ENCODE measurements at regions of chr12 and their contacts with region 1.

Region 1: GRCh38 chr12:6867413-6868210 is at the start of gene TPI1:
- DNase-seq: peak; percentile 79 to 83
- ATAC-seq: peak; percentile 83 to 84
- H3K4me3 ChIP-seq: peak within 1 kb of the TSS; percentile 74 to 99 (median 91)
- H3K27ac ChIP-seq: peak within 1 kb of the TSS; percentile 93 to 100 (median 99)
- H3K4me1 ChIP-seq: peaks cover 35 to 38% of the 10 kb centered on the region in 2 donors
- H3K27me3 ChIP-seq: no peaks in the 10 kb centered on the region
- CTCF ChIP-seq: no peak
- POLR2A ChIP-seq: peak; percentile 95 to 98
- total RNA-seq, gene TPI1: 500 to 741 (median 604) TPM

Region 2: GRCh38 chr12:6839482-6840201 is 28.0 kb before region 1 on chr12:
- in situ Hi-C with region 1: no loop called
- intact Hi-C with region 1: no loop called
- DNase-seq: no peak
- ATAC-seq: no peak
- H3K4me3 ChIP-seq: no peak overlapping the region
- H3K27ac ChIP-seq: no peak overlapping the region
- H3K4me1 ChIP-seq: no peaks in the 10 kb centered on the region
- H3K27me3 ChIP-seq: no peaks in the 10 kb centered on the region
- CTCF ChIP-seq: no peak
- POLR2A ChIP-seq: no peak

Region 3: GRCh38 chr12:6851921-6852650 is 15.5 kb before region 1 on chr12 and contains the start of gene USP5:
- in situ Hi-C with region 1: no loop called
- intact Hi-C with region 1: loop called (anchors 1 kb)
- DNase-seq: peak; percentile 99
- ATAC-seq: peak; percentile 85 to 88
- H3K4me3 ChIP-seq: peak within 1 kb of the TSS; percentile 68 to 83 (median 74)
- H3K27ac ChIP-seq: peak within 1 kb of the TSS; percentile 86 to 97 (median 92)
- H3K4me1 ChIP-seq: peaks cover 13 to 17% of the 10 kb centered on the region in 2 donors
- H3K27me3 ChIP-seq: no peaks in the 10 kb centered on the region
- CTCF ChIP-seq: peak in 2 of 5 experiments; percentile 13 to 23
- POLR2A ChIP-seq: peak in 1 of 2 donors; percentile 64
- total RNA-seq, gene USP5: 66.4 to 120 (median 74.1) TPM

Region 4: GRCh38 chr12:6890789-6891645 is 23.4 kb after region 1 on chr12:
- in situ Hi-C with region 1: no loop called
- intact Hi-C with region 1: loop called (anchors 1 kb)
- DNase-seq: peak; percentile 92 to 95
- ATAC-seq: peak; percentile 99
- H3K4me3 ChIP-seq: peak overlapping the region; percentile 60 to 83 (median 68)
- H3K27ac ChIP-seq: peak overlapping the region; percentile 85 to 92 (median 87)
- H3K4me1 ChIP-seq: peaks cover 10% of the 10 kb centered on the region in 2 donors
- H3K27me3 ChIP-seq: no peaks in the 10 kb centered on the region
- CTCF ChIP-seq: peak; percentile 78 to 94 (median 87)
- POLR2A ChIP-seq: peak; percentile 53 to 56

Region 5: DNA sequence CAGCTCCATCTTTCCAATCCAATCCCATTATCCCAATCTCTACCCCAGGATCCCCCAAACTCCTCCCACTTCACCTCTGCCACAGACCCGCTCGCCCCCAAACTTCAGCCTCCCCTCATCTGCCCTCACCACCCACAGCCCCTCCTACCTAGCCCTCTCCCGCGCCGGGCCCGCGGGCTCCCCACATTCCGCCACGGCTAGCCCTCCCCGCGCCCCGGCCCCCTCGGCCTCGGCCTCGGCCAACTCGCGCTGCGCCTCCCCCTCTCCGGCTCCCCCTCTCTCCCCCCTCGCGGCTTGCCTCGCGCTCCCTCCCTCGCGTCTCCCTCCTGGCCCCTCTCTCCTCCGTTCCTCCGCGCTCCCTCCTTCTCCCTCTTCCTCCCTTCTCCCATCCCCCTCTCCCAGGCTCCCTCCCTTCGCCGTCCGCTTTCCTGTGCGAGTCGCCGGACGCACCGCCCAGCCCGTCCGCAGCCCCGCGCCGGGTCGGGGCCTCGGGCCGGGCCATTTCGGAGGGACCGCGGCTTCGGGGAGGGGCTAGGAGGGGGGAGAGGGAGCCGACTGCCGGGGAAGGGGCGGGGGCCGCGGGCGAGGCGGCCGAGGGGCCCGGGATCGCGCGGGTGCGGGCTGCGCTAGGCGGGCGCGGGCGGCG is 59.9 kb after region 1 on chr12 and contains the start of gene ATN1:
- in situ Hi-C with region 1: no loop called
- intact Hi-C with region 1: loop called (anchors 2 kb)
- DNase-seq: peak; percentile 60 to 74
- ATAC-seq: peak; percentile 41 to 55
- H3K4me3 ChIP-seq: peak within 1 kb of the TSS; percentile 70 to 92 (median 86)
- H3K27ac ChIP-seq: peak within 1 kb of the TSS; percentile 88 to 98 (median 95)
- H3K4me1 ChIP-seq: peaks cover 44 to 52% of the 10 kb centered on the region in 2 donors
- H3K27me3 ChIP-seq: no peaks in the 10 kb centered on the region
- CTCF ChIP-seq: no peak
- POLR2A ChIP-seq: peak in 1 of 2 donors; percentile 14
- total RNA-seq, gene ATN1: 11.5 to 31.5 (median 26.5) TPM

Region 6: GRCh38 chr12:6944381-6945186 is 77.0 kb after region 1 on chr12:
- in situ Hi-C with region 1: no loop called
- intact Hi-C with region 1: loop called (anchors 5 kb)
- DNase-seq: peak; percentile 83 to 89
- ATAC-seq: peak; percentile 62 to 66
- H3K4me3 ChIP-seq: peak overlapping the region; percentile 67 to 82 (median 78)
- H3K27ac ChIP-seq: peak overlapping the region; percentile 90 to 94 (median 93)
- H3K4me1 ChIP-seq: peaks cover 13 to 30% of the 10 kb centered on the region in 2 donors
- H3K27me3 ChIP-seq: no peaks in the 10 kb centered on the region
- CTCF ChIP-seq: peak; percentile 89 to 96 (median 92)
- POLR2A ChIP-seq: no peak

Region 7: GRCh38 chr12:7018350-7019042 is 150.9 kb after region 1 on chr12 and contains the start of gene LPCAT3:
- in situ Hi-C with region 1: no loop called
- intact Hi-C with region 1: loop called (anchors 2 kb)
- DNase-seq: peak; percentile 94 to 98
- ATAC-seq: peak; percentile 92 to 95
- H3K4me3 ChIP-seq: peak within 1 kb of the TSS; percentile 81 to 95 (median 84)
- H3K27ac ChIP-seq: peak within 1 kb of the TSS; percentile 91 to 98 (median 95)
- H3K4me1 ChIP-seq: peaks cover 35 to 36% of the 10 kb centered on the region in 2 donors
- H3K27me3 ChIP-seq: no peaks in the 10 kb centered on the region
- CTCF ChIP-seq: peak; percentile 79 to 93 (median 89)
- POLR2A ChIP-seq: peak; percentile 81 to 88
- total RNA-seq, gene LPCAT3: 19.4 to 42.8 (median 36.7) TPM

Measured in gastrocnemius medialis (tissue), 4 donors.